ENCODE measurements at regions of chr11 and their contacts with region 1.

Region 1: DNA sequence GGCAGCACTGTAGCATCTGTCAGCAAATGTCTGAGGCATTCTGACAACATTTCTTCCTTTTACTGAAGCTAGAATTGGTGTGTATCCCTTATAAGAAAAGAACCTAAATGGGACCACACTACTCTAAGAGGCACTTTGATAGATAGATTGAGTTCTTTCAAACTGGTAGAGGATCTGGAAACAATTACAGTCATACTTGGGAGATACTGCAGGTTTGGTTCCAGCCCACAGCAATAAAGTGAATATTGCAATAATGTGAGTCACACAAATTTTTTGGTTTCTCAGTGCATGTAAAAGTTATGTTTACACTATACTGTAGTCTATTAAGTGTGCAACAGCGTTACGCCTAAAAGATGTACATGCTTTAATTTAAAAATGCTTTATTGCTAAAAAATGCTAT is 96.9 kb downstream of the SBF2 start:
- DNase-seq: no peak
- H3K4me3 ChIP-seq: no peak overlapping the region
- H3K27ac ChIP-seq: no peak overlapping the region
- H3K4me1 ChIP-seq: no peaks in the 10 kb centered on the region
- H3K27me3 ChIP-seq: no peaks in the 10 kb centered on the region
- CTCF ChIP-seq: no peak
- EP300 ChIP-seq: no peak
- POLR2A ChIP-seq: no peak

Region 2: GRCh38 chr11:9982800-9983579 is 214.1 kb before region 1 on chr11:
- intact Hi-C with region 1: loop called (anchors 10 kb)
- DNase-seq: no peak
- H3K4me3 ChIP-seq: no peak overlapping the region
- H3K27ac ChIP-seq: no peak overlapping the region
- H3K4me1 ChIP-seq: no peaks in the 10 kb centered on the region
- H3K27me3 ChIP-seq: no peaks in the 10 kb centered on the region
- CTCF ChIP-seq: no peak
- EP300 ChIP-seq: no peak
- POLR2A ChIP-seq: no peak